HepG2 (cell line): ENCODE measurements at regions of chr12 and their contacts with region 1.

Region 1: DNA sequence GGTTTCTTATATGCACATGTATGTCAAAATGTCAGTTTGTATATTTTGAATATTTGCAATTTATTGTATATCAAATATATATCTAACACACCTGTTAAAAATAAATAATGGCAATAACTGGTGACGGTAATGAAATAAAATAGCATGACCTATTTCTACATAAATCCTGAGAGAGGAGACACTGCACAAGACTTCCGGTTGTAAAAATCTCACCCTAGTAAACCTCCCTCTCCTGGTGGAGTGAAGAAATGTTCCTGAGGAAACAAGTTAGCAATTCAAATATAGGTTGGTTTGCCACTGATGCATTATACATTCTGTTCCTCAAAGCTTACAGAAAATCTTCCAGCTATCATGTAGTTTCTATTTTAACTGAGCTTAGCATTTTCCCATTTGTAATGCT is 166.1 kb upstream of the SYT10 start:
- DNase-seq: peak; percentile 10
- ATAC-seq: peak; percentile 49; the same call in 2 of the 3 replicates
- H3K4me3 ChIP-seq: no peak overlapping the region
- H3K27ac ChIP-seq: no peak overlapping the region
- H3K4me1 ChIP-seq: no peaks in the 10 kb centered on the region
- H3K27me3 ChIP-seq: no peaks in the 10 kb centered on the region
- CTCF ChIP-seq: no peak
- EP300 ChIP-seq: no peak
- POLR2A ChIP-seq: no peak
- RAD21 ChIP-seq: no peak

Region 2: DNA sequence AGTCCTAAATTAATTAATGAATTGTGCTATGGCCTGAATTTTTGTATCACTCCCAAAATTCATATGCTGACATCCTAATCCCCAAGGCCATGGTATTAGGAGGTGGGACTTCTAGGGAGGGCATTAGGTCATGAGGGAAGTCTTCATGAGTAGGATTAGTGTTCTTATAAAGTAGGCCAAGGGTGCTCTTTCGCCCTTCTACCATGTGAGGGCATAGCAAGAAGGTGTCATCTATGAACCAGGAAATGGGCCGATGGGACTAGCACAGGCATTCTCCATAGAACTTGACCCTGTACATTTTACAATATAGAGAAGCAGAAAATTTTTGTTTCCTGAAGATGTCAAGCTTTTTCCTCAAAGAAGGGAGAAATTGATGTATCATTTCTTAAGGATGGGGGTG is 178.7 kb before region 1 on chr12:
- CTCF ChIA-PET with region 1: no interaction called
- POLR2A ChIA-PET with region 1: no interaction called
- in situ Hi-C with region 1: no loop called
- intact Hi-C with region 1: loop called (anchors 5 kb)
- DNase-seq: peak; percentile 18
- ATAC-seq: peak; percentile 67
- H3K4me3 ChIP-seq: no peak overlapping the region
- H3K27ac ChIP-seq: no peak overlapping the region
- H3K4me1 ChIP-seq: no peaks in the 10 kb centered on the region
- H3K27me3 ChIP-seq: no peaks in the 10 kb centered on the region
- CTCF ChIP-seq: peak; percentile 23; the same call in 1 of the 2 replicates
- EP300 ChIP-seq: no peak
- POLR2A ChIP-seq: no peak
- RAD21 ChIP-seq: no peak

Region 3: DNA sequence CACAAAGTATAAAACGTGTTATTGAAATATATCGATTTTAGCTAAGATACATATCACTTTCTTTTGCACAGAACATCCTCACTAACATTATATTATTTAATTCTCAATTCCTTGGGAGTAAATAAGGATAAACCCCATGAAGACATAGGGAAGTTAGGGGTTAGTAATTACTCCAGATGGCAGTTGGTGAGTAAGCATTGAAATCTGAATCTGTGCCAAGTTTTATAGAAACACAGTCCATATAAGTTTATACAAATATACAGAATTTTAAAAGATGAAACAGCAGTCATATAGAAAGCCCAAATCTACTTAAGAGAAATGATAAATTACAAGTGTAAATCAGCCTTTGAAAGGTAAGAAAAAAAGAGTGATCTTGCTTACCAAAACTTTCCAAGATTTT is 34.2 kb after region 1 on chr12:
- CTCF ChIA-PET with region 1: no interaction called
- POLR2A ChIA-PET with region 1: no interaction called
- in situ Hi-C with region 1: no loop called
- intact Hi-C with region 1: no loop called
- DNase-seq: no peak
- ATAC-seq: no peak
- H3K4me3 ChIP-seq: no peak overlapping the region
- H3K27ac ChIP-seq: no peak overlapping the region
- H3K4me1 ChIP-seq: no peaks in the 10 kb centered on the region
- H3K27me3 ChIP-seq: no peaks in the 10 kb centered on the region
- CTCF ChIP-seq: no peak
- EP300 ChIP-seq: no peak
- POLR2A ChIP-seq: no peak
- RAD21 ChIP-seq: no peak